WTC11 (cell line): ENCODE measurements at regions of chr5 and their contacts with region 1.

Region 1: GRCh38 chr5:1174122-1174936 is 27.1 kb upstream of the SLC6A19 start:
- DNase-seq: peak; percentile 78
- ATAC-seq: peak; percentile 74
- H3K4me3 Mint-ChIP-seq: no peak overlapping the region
- H3K27ac Mint-ChIP-seq: no peak overlapping the region
- H3K4me1 Mint-ChIP-seq: no peaks in the 10 kb centered on the region
- H3K27me3 Mint-ChIP-seq: peaks cover 3% of the 10 kb centered on the region; the same call in 1 of the 2 replicates
- CTCF ChIP-seq: peak; percentile 59

Region 2: DNA sequence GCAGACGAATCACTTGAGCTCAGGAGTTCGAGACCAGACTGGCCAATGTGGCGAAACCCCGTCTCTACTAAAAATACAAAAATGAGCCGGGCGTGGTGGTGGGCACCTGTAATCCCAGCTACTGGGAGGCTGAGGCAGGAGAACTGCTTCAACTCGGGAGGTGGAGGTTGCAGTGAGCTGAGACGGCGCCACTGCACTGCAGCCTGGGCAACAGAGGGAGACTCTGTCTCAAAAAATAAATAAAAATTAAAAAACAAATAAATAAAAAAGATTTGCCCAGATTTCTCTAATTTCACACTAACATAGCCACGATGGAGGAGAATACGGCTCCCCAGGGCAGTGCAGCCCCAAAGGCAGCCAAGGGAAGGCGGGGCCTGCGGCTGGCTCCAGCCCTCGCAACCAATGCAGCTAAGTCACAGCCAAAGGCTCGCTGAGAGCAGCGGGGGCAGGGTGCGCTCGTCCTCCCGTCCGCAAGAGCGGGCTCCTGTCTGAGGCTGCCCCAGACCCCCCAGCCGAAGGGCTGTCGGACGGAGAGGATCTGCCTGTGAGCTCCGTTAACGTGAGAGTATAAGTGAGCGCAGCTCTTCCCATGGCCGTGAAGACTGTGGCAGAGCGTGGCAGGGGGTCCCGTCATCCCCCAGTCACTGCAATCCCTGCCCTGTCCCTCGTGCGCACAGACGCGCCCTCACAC is 106.0 kb before region 1 on chr5:
- CTCF ChIA-PET with region 1: no interaction called
- POLR2A ChIA-PET with region 1: no interaction called
- DNase-seq: no peak
- ATAC-seq: no peak
- H3K4me3 Mint-ChIP-seq: no peak overlapping the region
- H3K27ac Mint-ChIP-seq: no peak overlapping the region; the same call in 1 of the 2 replicates
- H3K4me1 Mint-ChIP-seq: no peaks in the 10 kb centered on the region
- H3K27me3 Mint-ChIP-seq: no peaks in the 10 kb centered on the region
- CTCF ChIP-seq: no peak

Region 3: DNA sequence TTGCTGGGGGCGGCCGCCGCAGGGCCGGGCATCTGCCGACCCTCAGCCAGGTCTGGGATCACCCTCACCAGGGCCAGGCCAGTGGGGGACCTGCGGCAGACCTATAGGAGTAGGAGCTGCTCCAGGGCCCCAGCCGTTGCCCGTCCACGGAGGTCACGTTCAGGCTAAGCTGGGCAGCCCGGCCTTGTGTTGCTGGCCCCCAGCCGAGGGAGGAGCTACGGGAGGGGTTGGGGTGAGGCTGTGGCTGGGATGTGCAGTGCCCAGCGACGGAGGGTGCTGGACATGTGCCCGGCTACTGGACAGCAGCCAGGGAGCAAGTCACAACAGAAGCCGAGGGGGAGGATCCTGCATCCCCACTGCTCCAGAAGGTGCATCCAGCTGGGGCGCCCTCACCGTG is 12.5 kb before region 1 on chr5:
- CTCF ChIA-PET with region 1: interaction called, 10 read pairs
- POLR2A ChIA-PET with region 1: no interaction called
- DNase-seq: no peak
- ATAC-seq: no peak
- H3K4me3 Mint-ChIP-seq: no peak overlapping the region
- H3K27ac Mint-ChIP-seq: no peak overlapping the region
- H3K4me1 Mint-ChIP-seq: no peaks in the 10 kb centered on the region
- H3K27me3 Mint-ChIP-seq: peaks cover 18% of the 10 kb centered on the region
- CTCF ChIP-seq: no peak

Region 4: GRCh38 chr5:1204693-1205242 is 30.4 kb after region 1 on chr5:
- CTCF ChIA-PET with region 1: interaction called, 23 read pairs
- POLR2A ChIA-PET with region 1: no interaction called
- DNase-seq: peak; percentile 31
- ATAC-seq: peak; percentile 66
- H3K4me3 Mint-ChIP-seq: no peak overlapping the region
- H3K27ac Mint-ChIP-seq: no peak overlapping the region
- H3K4me1 Mint-ChIP-seq: peaks cover 7% of the 10 kb centered on the region; the same call in 1 of the 2 replicates
- H3K27me3 Mint-ChIP-seq: no peaks in the 10 kb centered on the region
- CTCF ChIP-seq: no peak